ENCODE measurements at regions of chr3 and their contacts with region 1.

Region 1: GRCh38 chr3:49856181-49857005 is at the start of gene TRAIP:
- DNase-seq: peak; percentile 99
- H3K4me3 Mint-ChIP-seq: peak within 1 kb of the TSS; percentile 97
- H3K27ac Mint-ChIP-seq: peak within 1 kb of the TSS; percentile 92
- H3K4me1 Mint-ChIP-seq: peaks cover 15% of the 10 kb centered on the region
- H3K27me3 Mint-ChIP-seq: no peaks in the 10 kb centered on the region
- total RNA-seq, gene TRAIP: 27.1 and 30.4 TPM in 2 replicates

Region 2: GRCh38 chr3:49723628-49724551 is 132.5 kb before region 1 on chr3 and contains the start of gene GMPPB:
- intact Hi-C with region 1: loop called (anchors 1 kb)
- DNase-seq: peak; percentile 99
- H3K4me3 Mint-ChIP-seq: peak within 1 kb of the TSS; percentile 95
- H3K27ac Mint-ChIP-seq: peak within 1 kb of the TSS; percentile 95
- H3K4me1 Mint-ChIP-seq: peaks cover 27% of the 10 kb centered on the region
- H3K27me3 Mint-ChIP-seq: no peaks in the 10 kb centered on the region
- total RNA-seq, gene GMPPB: 43.5 and 45.8 TPM in 2 replicates

Region 3: GRCh38 chr3:49786241-49786958 is 70.0 kb before region 1 on chr3 and contains the start of gene IP6K1:
- intact Hi-C with region 1: no loop called
- DNase-seq: peak; percentile 100
- H3K4me3 Mint-ChIP-seq: peak within 1 kb of the TSS; percentile 93
- H3K27ac Mint-ChIP-seq: peak within 1 kb of the TSS; percentile 94
- H3K4me1 Mint-ChIP-seq: peaks cover 25% of the 10 kb centered on the region
- H3K27me3 Mint-ChIP-seq: peaks cover 5% of the 10 kb centered on the region
- total RNA-seq, gene IP6K1: 39.6 and 42.2 TPM in 2 replicates

Region 4: GRCh38 chr3:49867871-49868321 is 11.5 kb after region 1 on chr3:
- intact Hi-C with region 1: loop called (anchors 1 kb)
- DNase-seq: peak; percentile 76
- H3K4me3 Mint-ChIP-seq: peak overlapping the region; percentile 17
- H3K27ac Mint-ChIP-seq: no peak overlapping the region
- H3K4me1 Mint-ChIP-seq: no peaks in the 10 kb centered on the region
- H3K27me3 Mint-ChIP-seq: peaks cover 53% of the 10 kb centered on the region

Region 5: DNA sequence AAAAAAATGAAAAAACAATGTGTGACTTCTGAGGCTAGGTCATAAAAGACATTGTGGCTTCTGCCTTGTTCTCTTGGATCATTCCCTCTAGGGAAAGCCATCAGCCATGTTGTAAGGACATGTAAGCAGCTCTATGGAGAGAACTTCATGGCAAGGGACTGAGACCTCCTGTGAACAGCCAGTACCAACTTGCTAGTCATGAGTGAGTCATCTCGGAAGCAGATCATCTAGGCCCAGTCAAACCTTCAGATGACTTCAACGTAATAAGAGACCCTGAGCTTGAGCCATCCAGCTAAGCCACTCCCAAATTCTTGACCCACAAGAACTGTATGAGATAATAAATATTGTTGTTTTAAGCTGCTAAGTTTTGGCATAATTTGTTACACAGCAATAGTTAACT is 68.3 kb after region 1 on chr3:
- intact Hi-C with region 1: no loop called
- DNase-seq: no peak
- H3K4me3 Mint-ChIP-seq: no peak overlapping the region
- H3K27ac Mint-ChIP-seq: no peak overlapping the region
- H3K4me1 Mint-ChIP-seq: peaks cover 21% of the 10 kb centered on the region
- H3K27me3 Mint-ChIP-seq: no peaks in the 10 kb centered on the region

Region 6: DNA sequence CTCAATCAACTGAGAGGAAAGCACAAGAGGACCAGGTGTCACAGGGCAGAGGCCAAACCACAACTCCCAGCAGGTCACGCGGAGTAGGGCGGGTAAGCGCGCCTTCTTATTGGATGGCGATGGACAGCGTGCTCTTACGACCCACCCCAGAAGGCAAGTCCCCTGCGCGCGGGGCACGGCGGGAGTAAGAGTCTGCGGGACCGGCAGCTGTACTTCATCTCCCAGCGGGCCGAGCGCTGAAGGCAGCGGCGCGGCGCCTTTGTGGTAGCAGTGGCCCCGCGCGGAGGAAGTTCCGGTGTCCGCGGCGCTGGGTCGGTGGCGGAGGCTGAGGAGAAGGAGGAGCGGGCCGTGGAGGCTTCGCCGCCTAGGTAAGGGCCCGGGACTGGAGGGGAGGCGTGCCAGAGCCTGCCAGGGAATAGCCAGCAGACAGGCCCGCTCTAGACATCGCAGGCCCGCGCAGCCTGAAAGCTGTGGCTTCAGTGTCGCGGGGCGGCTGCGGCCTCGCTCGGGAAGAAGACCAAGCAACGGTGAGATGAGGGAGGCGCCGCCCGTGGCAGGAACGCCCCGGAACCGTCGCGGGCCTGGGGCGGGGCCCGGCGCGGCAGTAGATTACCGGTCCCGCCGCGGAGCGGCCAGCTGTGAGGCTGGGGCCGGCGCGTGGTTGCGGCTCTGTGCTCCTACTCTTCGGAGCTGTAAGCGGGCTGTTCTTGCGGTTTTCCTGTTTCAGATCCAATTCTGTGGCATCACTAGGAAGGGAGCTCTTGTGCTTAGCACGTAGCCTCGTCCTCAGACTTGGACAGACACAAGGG is 83.7 kb after region 1 on chr3 and contains the start of gene RBM6:
- intact Hi-C with region 1: loop called (anchors 2 kb)
- DNase-seq: peak; percentile 98
- H3K4me3 Mint-ChIP-seq: peak within 1 kb of the TSS; percentile 99
- H3K27ac Mint-ChIP-seq: peak within 1 kb of the TSS; percentile 98
- H3K4me1 Mint-ChIP-seq: peaks cover 24% of the 10 kb centered on the region
- H3K27me3 Mint-ChIP-seq: no peaks in the 10 kb centered on the region
- total RNA-seq, gene RBM6: 95.3 and 100 TPM in 2 replicates